Body of pancreas (tissue), 4 donors: ENCODE measurements at regions of chr9 and their contacts with region 1.

Region 1: GRCh38 chr9:69044240-69045219 is 9.0 kb downstream of the FXN start:
- DNase-seq: no peak
- ATAC-seq: peak; percentile 12
- H3K4me3 ChIP-seq: no peak overlapping the region
- H3K27ac ChIP-seq: no peak overlapping the region
- H3K4me1 ChIP-seq: peaks cover 3% of the 10 kb centered on the region
- H3K27me3 ChIP-seq: no peaks in the 10 kb centered on the region
- CTCF ChIP-seq: no peak
- POLR2A ChIP-seq: no peak

Region 2: GRCh38 chr9:69199769-69200470 is 155.4 kb after region 1 on chr9:
- intact Hi-C with region 1: loop called (anchors 5 kb)
- DNase-seq: peak in 1 of 4 donors; percentile 16
- ATAC-seq: no peak
- H3K4me3 ChIP-seq: no peak overlapping the region
- H3K27ac ChIP-seq: no peak overlapping the region
- H3K4me1 ChIP-seq: peaks cover 7% of the 10 kb centered on the region
- H3K27me3 ChIP-seq: no peaks in the 10 kb centered on the region
- CTCF ChIP-seq: no peak
- POLR2A ChIP-seq: no peak